ENCODE measurements at regions of chr1 and their contacts with region 1.

Region 1: DNA sequence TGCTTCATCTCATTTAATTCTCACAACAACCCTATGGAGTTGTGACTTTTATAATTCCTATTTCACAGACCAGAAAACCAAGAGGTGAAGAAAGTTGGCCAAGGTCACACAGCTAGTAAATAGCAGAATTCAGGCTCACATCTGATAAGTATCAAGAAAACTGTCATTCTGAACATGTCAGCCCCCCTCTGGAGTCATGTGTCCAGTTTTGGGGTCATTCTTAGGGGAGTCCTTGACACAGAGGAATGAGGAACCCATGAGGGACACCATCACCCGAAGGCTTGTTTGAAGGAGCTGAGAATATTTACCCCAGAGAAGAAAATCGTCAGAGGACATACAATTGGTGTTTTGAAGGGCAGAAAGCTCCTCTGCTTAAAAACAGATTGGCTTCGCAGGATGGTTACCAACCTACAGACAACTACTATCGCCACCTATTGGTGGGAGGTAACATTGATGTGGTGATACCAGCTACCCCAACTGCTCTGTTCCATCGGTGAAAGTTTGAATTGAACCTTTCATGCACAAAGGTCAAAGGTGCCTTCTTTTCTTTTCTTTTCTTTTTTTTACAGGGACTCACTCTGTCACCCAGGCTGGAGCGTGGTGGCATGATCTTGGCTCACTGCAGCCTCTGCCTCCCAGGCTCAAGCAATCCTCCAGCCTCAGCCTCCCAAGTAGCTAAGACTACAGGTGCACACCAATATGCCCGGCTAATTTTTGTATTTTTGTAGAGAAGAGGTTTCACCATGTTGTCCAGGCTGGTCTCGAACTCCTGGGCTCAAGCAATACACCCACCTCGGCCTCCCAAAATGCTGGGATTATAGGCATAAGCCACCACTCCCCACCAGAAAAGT is 31.3 kb downstream of the NCMAP start:
- DNase-seq: peak; percentile 39
- H3K4me3 ChIP-seq: no peak overlapping the region
- H3K27ac ChIP-seq: no peak overlapping the region
- H3K4me1 ChIP-seq: peaks cover 12% of the 10 kb centered on the region
- H3K27me3 ChIP-seq: no peaks in the 10 kb centered on the region
- CTCF ChIP-seq: peak; percentile 81 to 85

Region 2: DNA sequence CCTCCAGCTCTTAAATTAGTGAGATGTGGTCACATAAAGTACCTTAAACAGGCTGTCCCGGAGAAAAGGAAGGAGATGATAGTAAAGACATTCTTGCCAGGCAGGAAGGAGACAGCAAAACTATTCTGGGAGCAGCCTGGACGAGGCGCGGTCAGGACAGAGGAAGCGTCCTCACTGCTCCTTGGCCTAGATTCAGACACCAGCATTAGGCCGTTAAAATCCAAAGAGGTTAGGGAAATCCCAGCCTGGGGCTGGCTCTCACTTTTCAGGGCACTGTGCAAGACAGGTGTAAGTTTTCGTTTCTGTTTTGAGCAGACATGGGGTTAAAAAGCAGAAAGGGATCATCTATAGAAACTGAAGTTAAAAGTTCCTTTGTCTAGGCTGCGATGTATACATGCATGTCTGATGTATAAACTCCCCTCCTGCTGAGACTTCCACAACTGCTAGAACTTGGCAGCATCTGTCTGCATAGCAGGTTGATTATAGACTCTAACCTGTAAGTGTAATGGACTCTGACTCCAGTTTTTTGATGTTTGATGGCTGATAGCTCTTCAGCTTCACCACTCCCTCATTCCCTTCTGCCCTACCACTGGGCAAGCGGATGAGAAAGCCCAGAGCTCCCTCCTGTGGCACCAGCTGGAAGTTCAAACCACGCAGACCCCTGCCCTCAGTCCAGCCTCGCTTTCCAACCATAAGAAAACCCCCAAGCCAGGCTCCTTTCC is 195.2 kb before region 1 on chr1:
- CTCF ChIA-PET with region 1: interaction called, 3 read pairs
- dilution Hi-C with region 1: no loop called
- in situ Hi-C with region 1: no loop called
- intact Hi-C with region 1: loop called (anchors 5 kb)
- DNase-seq: peak; percentile 50
- H3K4me3 ChIP-seq: peak overlapping the region in 2 of 3 experiments; percentile 14 to 24
- H3K27ac ChIP-seq: peak overlapping the region; percentile 76
- H3K4me1 ChIP-seq: peaks cover 28% of the 10 kb centered on the region
- H3K27me3 ChIP-seq: no peaks in the 10 kb centered on the region
- CTCF ChIP-seq: peak; percentile 87 to 90

Region 3: DNA sequence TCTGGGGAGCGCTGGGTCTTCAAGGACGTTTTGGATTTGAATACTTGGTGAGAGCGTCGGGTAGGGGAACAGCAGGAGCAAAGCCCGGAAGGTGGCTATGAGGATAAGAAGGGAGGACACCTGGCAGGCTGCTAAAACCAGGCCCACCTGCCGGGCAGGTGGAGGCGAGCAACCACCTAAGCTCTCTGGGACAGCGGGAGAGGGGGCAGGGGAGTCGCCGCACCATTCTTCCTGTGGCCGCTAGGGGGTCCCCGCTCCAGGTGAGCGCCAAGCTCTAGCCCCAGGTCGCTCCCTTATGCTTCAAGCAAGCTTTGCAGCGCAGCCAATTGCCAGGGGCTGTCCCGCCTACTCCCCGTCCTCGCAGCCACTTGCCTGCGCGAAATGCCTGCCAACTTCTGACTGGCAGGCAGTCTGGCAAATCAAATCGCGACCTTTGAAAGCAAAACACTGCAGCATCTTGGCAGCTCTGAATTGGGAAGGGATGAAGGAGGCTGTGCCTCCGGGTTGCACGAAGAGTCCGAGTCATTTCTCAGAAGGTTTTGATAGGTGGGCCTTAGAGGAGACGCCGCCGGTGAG is 171.8 kb before region 1 on chr1 and contains the start of gene NIPAL3:
- CTCF ChIA-PET with region 1: interaction called, 27 read pairs
- dilution Hi-C with region 1: no loop called
- in situ Hi-C with region 1: no loop called
- intact Hi-C with region 1: loop called (anchors 2 kb)
- DNase-seq: peak; percentile 100
- H3K4me3 ChIP-seq: peak within 1 kb of the TSS; percentile 74 to 79 (median 75)
- H3K27ac ChIP-seq: peak within 1 kb of the TSS; percentile 94
- H3K4me1 ChIP-seq: peaks cover 65% of the 10 kb centered on the region
- H3K27me3 ChIP-seq: no peaks in the 10 kb centered on the region
- CTCF ChIP-seq: peak; percentile 83 to 89
- total RNA-seq, gene NIPAL3: 48.9 to 116 TPM

Region 4: GRCh38 chr1:24502709-24503058 is 84.5 kb before region 1 on chr1 and contains the start of gene RCAN3:
- CTCF ChIA-PET with region 1: interaction called, 4 read pairs
- dilution Hi-C with region 1: loop called (anchors 5 kb)
- in situ Hi-C with region 1: no loop called
- intact Hi-C with region 1: no loop called
- DNase-seq: peak; percentile 88
- H3K4me3 ChIP-seq: peak within 1 kb of the TSS; percentile 81 to 97 (median 94)
- H3K27ac ChIP-seq: peak within 1 kb of the TSS; percentile 84
- H3K4me1 ChIP-seq: peaks cover 11% of the 10 kb centered on the region
- H3K27me3 ChIP-seq: no peaks in the 10 kb centered on the region
- CTCF ChIP-seq: no peak
- total RNA-seq, gene RCAN3: 21.0 to 34.8 TPM

Region 5: GRCh38 chr1:26555550-26556510 is 1968.6 kb after region 1 on chr1:
- CTCF ChIA-PET with region 1: interaction called, 13 read pairs
- dilution Hi-C with region 1: no loop called
- in situ Hi-C with region 1: no loop called
- intact Hi-C with region 1: no loop called
- DNase-seq: no peak
- H3K4me3 ChIP-seq: no peak overlapping the region
- H3K27ac ChIP-seq: no peak overlapping the region
- H3K4me1 ChIP-seq: peaks cover 27% of the 10 kb centered on the region
- H3K27me3 ChIP-seq: no peaks in the 10 kb centered on the region
- CTCF ChIP-seq: no peak